Caco-2 (cell line): ENCODE measurements at regions of chr4 and their contacts with region 1.

Region 1: GRCh38 chr4:55948726-55949474 is at the start of gene CEP135:
- DNase-seq: peak; percentile 92 to 95
- H3K4me3 ChIP-seq: peak within 1 kb of the TSS; percentile 85
- H3K4me3 Mint-ChIP-seq: peak within 1 kb of the TSS; percentile 90
- H3K27ac Mint-ChIP-seq: peak within 1 kb of the TSS; percentile 93
- H3K4me1 ChIP-seq: 0 out of 2 replicates have a peak, but pooled peaks cover 10% of the 10 kb centered on the region
- H3K4me1 Mint-ChIP-seq: peaks cover 16% of the 10 kb centered on the region
- H3K27me3 ChIP-seq: no peaks in the 10 kb centered on the region
- H3K27me3 Mint-ChIP-seq: no peaks in the 10 kb centered on the region
- CTCF ChIP-seq: peak; percentile 80 to 90
- total RNA-seq, gene CEP135: 10.5 and 11.3 TPM in 2 replicates

Region 2: GRCh38 chr4:56048702-56049431 is 100.0 kb after region 1 on chr4:
- CTCF ChIA-PET with region 1: interaction called, 6 read pairs
- POLR2A ChIA-PET with region 1: no interaction called
- intact Hi-C with region 1: loop called (anchors 1 kb)
- DNase-seq: peak; percentile 55 to 84
- H3K4me3 ChIP-seq: peak overlapping the region; percentile 86
- H3K4me3 Mint-ChIP-seq: peak overlapping the region; percentile 76
- H3K27ac Mint-ChIP-seq: peak overlapping the region; percentile 37
- H3K4me1 ChIP-seq: no peaks in the 10 kb centered on the region
- H3K4me1 Mint-ChIP-seq: peaks cover 7% of the 10 kb centered on the region
- H3K27me3 ChIP-seq: no peaks in the 10 kb centered on the region
- H3K27me3 Mint-ChIP-seq: peaks cover 2% of the 10 kb centered on the region
- CTCF ChIP-seq: no peak

Region 3: DNA sequence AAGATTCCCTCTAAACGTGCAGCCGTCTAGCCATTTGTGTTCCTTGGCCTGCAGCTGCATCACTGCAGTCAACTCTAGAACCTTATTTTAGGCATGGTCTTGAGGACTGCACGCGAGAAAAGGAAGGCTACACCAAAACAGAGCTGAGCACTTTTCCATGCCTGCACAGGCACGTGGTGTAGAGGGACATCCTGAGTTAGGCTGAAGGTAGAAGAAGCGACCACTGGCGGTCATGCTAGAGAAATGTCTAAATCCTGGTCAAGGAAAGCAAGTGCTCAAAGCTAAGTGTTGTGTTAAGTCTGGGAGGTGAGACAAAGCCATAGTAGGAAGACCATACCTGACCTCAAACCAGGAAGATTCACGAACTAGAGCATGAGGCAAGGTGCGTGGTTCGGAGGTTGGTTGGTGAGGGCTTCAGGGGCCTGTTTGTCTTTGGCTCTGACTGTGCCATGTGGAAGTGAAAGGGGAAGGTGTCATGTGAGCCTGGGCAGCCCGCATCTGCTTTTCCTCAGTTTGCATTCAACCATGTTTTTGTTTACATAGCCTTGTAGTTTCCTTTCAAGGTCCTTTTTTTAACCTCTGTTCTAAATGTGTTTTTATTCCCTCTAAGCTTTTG is 234.6 kb after region 1 on chr4:
- CTCF ChIA-PET with region 1: no interaction called
- POLR2A ChIA-PET with region 1: no interaction called
- intact Hi-C with region 1: no loop called
- DNase-seq: no peak
- H3K4me3 ChIP-seq: no peak overlapping the region
- H3K4me3 Mint-ChIP-seq: no peak overlapping the region
- H3K27ac Mint-ChIP-seq: no peak overlapping the region
- H3K4me1 ChIP-seq: no peaks in the 10 kb centered on the region
- H3K4me1 Mint-ChIP-seq: no peaks in the 10 kb centered on the region
- H3K27me3 ChIP-seq: no peaks in the 10 kb centered on the region
- H3K27me3 Mint-ChIP-seq: no peaks in the 10 kb centered on the region
- CTCF ChIP-seq: no peak

Region 4: DNA sequence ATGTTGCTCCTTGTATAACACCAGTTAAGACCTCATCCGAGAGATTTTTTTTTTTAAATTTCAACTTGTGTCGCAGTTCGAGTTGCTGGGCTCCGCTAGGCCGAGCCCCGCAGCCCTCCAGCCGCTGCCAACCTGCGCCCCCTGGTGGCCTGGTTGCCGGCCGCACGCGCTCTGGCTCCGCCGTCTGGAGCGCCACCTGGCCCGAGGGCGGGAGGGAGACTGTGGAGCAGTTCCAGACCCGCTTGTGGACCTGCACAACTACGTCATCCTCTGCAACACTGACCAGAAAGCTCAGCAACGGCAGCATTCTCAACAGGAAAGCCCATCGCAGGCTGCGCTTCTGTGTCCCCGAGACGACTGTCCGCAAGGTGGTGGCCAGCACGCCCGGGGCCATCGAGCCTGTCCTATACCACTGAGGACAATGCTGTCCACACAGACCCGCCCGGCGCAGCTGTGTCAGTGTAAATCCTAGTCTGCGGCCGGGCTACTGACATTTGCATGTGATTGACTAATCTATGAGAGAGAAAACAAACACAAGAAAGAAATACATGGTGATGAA is 595.8 kb after region 1 on chr4:
- CTCF ChIA-PET with region 1: no interaction called
- POLR2A ChIA-PET with region 1: no interaction called
- intact Hi-C with region 1: loop called (anchors 2 kb)
- DNase-seq: peak; percentile 83 to 95
- H3K4me3 ChIP-seq: peak overlapping the region; percentile 30
- H3K4me3 Mint-ChIP-seq: peak overlapping the region; percentile 73
- H3K27ac Mint-ChIP-seq: no peak overlapping the region
- H3K4me1 ChIP-seq: 0 out of 2 replicates have a peak, but pooled peaks cover 4% of the 10 kb centered on the region
- H3K4me1 Mint-ChIP-seq: peaks cover 5% of the 10 kb centered on the region
- H3K27me3 ChIP-seq: no peaks in the 10 kb centered on the region
- H3K27me3 Mint-ChIP-seq: peaks cover 8% of the 10 kb centered on the region
- CTCF ChIP-seq: peak; percentile 87 to 94